ENCODE measurements at regions of chr6 and their contacts with region 1.

Region 1: DNA sequence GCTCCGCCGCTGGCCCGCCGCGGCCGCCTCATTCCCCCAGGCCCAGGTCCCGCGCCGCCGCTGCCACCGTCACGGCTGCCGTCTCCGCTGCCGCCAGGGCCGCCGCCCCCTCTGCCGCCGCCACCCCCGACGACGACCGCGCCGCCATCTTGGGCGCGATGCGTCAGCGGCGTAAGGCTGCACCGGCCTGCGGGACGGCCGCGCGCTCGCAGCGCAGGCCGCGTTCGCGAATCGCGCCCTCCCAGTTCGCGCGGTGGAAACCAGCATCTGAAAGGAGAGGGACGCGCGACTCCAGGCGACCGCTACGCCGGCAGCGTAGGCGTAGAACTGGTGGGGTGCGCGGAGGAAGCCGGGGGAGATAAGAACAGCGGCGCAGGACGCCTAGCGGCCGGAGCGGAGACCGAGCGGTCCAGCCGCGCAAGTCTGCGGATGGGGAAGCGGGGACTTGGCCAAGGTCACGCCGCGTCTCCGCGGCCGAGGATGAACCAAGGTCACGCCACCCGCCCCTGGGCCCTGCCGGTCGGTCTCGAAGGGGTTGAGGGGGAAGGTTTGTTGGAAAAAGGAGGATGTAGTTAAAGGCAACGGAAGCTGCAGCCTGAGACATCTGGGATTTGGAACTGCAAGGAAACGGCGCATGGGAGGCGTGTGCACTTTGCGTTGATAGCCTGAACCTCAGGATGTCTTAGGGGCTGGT is at the start of gene NUDT3:
- DNase-seq: peak; percentile 87 to 93
- H3K4me3 ChIP-seq: peak within 1 kb of the TSS; percentile 81
- H3K4me3 Mint-ChIP-seq: no peak within 1 kb of the TSS
- H3K27ac Mint-ChIP-seq: no peak within 1 kb of the TSS
- H3K4me1 ChIP-seq: no peaks in the 10 kb centered on the region
- H3K4me1 Mint-ChIP-seq: no peaks in the 10 kb centered on the region
- H3K27me3 ChIP-seq: no peaks in the 10 kb centered on the region
- H3K27me3 Mint-ChIP-seq: no peaks in the 10 kb centered on the region
- CTCF ChIP-seq: peak; percentile 73 to 91
- total RNA-seq, gene NUDT3: 22.3 and 22.9 TPM in 2 replicates

Region 2: DNA sequence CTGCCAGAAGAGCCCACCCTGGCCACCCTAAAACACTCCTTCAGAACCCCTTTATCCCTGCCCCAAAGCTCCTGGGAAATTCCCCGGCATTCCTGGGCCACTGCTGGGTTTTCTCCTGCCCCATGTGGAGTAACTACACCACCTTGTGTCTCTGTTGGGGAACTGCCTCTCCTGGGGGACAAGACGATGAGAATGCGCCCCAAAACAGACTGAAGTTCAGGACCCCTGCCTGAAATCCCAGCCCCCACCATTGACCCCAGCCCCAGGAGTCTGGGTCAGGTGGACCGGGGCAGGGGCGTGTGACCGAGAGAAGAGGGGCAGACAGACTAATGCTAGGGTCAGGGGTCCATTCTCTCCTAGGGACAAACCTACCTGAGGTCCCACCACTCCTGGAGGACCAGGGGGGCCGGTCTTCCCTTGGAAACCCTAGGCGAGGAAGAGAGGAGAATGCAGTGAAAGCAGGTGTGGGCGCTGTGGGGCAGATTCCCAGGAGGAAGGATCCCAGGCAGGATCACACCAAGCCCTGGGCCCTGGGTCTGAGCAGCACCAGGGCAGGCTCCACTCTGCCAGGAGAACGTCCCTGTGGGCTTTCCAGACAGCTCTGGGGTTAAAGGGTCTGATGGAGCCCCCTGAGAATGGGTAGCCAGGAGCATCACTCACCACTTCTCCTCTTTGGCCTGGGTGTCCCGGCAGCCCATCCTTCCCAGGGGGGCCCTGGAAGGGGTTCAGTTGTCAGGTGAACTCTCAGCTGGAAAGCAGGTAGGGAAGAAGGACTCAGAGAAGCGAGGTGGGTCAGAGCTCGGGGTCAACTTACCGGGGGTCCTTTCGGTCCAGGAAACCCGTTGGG is 1219.7 kb before region 1 on chr6:
- CTCF ChIA-PET with region 1: no interaction called
- POLR2A ChIA-PET with region 1: interaction called, 11 read pairs
- intact Hi-C with region 1: no loop called
- DNase-seq: peak; percentile 27 to 46
- H3K4me3 ChIP-seq: no peak overlapping the region
- H3K4me3 Mint-ChIP-seq: no peak overlapping the region
- H3K27ac Mint-ChIP-seq: peak overlapping the region; percentile 30
- H3K4me1 ChIP-seq: no peaks in the 10 kb centered on the region
- H3K4me1 Mint-ChIP-seq: no peaks in the 10 kb centered on the region
- H3K27me3 ChIP-seq: no peaks in the 10 kb centered on the region
- H3K27me3 Mint-ChIP-seq: peaks cover 19% of the 10 kb centered on the region
- CTCF ChIP-seq: peak; percentile 63 to 76

Region 3: DNA sequence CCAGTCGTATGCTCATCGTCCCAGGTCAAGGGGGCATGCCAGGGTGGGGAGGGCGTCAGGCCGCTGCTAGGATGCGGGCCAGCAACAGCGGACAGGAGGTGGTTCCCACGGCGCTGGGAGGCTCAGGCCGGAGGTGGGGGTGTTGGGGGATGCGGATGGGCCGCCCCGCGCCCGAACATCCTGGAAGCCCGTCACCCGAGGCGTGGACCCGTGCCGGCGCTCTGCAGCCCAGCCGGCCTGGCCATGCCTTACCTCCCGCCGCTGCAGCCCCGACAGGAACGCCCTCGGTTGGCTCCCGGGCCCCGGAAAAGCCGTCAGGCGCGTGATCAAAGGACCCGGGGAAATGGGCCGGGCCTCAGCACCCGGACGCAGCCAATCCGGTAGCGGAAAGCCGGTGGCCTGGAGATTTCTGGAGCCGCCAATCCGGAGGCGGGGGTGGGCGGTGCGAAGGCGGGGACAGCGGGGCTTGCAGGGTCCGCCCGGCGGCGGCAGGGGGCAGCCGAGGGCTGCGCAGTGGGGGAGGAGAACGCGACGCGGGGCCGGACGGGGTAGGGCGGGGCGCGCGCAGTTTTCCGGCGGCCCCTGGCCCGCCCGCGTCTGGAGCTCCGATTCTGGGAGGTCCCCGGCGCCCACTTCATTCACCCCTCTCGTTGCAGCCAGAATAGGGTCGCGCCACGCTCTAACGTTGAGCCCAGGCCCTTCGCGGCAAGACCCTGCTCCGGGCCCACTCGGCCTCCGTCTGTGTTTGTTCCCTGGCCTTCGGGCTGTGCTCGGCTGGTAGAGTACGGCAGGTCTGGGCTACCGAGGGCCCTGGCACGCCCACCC is 143.7 kb before region 1 on chr6 and contains the start of gene SMIM29:
- CTCF ChIA-PET with region 1: interaction called, 3 read pairs
- POLR2A ChIA-PET with region 1: interaction called, 5 read pairs
- intact Hi-C with region 1: loop called (anchors 2 kb)
- DNase-seq: peak; percentile 95 to 97
- H3K4me3 ChIP-seq: peak within 1 kb of the TSS; percentile 85
- H3K4me3 Mint-ChIP-seq: peak within 1 kb of the TSS; percentile 87
- H3K27ac Mint-ChIP-seq: peak within 1 kb of the TSS; percentile 89
- H3K4me1 ChIP-seq: peaks cover 8% of the 10 kb centered on the region; the same call in 1 of the 2 replicates
- H3K4me1 Mint-ChIP-seq: peaks cover 7% of the 10 kb centered on the region
- H3K27me3 ChIP-seq: no peaks in the 10 kb centered on the region
- H3K27me3 Mint-ChIP-seq: no peaks in the 10 kb centered on the region
- CTCF ChIP-seq: peak; percentile 77 to 95
- total RNA-seq, gene SMIM29: 14.3 and 16.0 TPM in 2 replicates

Region 4: DNA sequence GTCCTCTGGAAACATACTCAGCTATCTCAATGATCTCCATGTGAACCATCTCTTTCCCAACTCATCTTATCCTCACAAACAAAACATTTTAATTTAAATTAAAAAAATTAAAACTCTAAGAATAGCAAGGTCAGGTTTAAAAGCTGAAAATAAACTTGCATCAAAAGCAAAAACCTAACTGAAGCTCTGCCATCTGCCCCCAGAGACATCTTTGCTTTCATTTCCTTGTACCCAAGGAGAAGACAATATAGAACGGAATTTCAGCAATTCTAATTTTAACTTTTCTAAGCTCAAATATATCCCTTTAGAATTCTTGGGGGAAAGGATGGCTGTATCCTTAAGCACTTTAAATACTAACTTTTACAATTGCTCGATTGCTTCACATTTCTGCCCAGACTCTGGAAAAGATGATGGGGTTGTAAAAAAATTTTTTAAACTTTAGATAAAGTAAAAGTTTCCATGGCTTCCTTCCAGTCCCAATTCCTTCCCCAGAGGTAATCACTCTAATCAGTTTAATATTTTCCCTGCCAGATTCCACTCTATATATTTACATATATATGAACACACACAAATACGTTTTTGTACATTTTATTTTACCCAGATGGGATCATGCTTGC is 74.7 kb before region 1 on chr6:
- CTCF ChIA-PET with region 1: no interaction called
- POLR2A ChIA-PET with region 1: interaction called, 4 read pairs
- intact Hi-C with region 1: loop called (anchors 2 kb)
- DNase-seq: no peak
- H3K4me3 ChIP-seq: no peak overlapping the region
- H3K4me3 Mint-ChIP-seq: no peak overlapping the region
- H3K27ac Mint-ChIP-seq: peak overlapping the region; percentile 94
- H3K4me1 ChIP-seq: peaks cover 62% of the 10 kb centered on the region
- H3K4me1 Mint-ChIP-seq: peaks cover 47% of the 10 kb centered on the region
- H3K27me3 ChIP-seq: no peaks in the 10 kb centered on the region
- H3K27me3 Mint-ChIP-seq: no peaks in the 10 kb centered on the region
- CTCF ChIP-seq: no peak

Region 5: GRCh38 chr6:34375833-34376232 is 16.8 kb before region 1 on chr6:
- CTCF ChIA-PET with region 1: no interaction called
- POLR2A ChIA-PET with region 1: no interaction called
- intact Hi-C with region 1: loop called (anchors 1 kb)
- DNase-seq: no peak
- H3K4me3 ChIP-seq: no peak overlapping the region
- H3K4me3 Mint-ChIP-seq: no peak overlapping the region
- H3K27ac Mint-ChIP-seq: no peak overlapping the region
- H3K4me1 ChIP-seq: peaks cover 9% of the 10 kb centered on the region
- H3K4me1 Mint-ChIP-seq: no peaks in the 10 kb centered on the region
- H3K27me3 ChIP-seq: no peaks in the 10 kb centered on the region
- H3K27me3 Mint-ChIP-seq: no peaks in the 10 kb centered on the region
- CTCF ChIP-seq: no peak